ENCODE measurements at regions of chr1 and their contacts with region 1.

Region 1: GRCh38 chr1:155063550-155064110 is at the start of gene EFNA4:
- DNase-seq: peak; percentile 91
- H3K4me3 Mint-ChIP-seq: peak within 1 kb of the TSS; percentile 91
- H3K27ac Mint-ChIP-seq: peak within 1 kb of the TSS; percentile 68
- H3K4me1 Mint-ChIP-seq: peaks cover 36% of the 10 kb centered on the region
- H3K27me3 Mint-ChIP-seq: no peaks in the 10 kb centered on the region
- total RNA-seq, gene EFNA4: 8.2 to 8.3 TPM

Region 2: DNA sequence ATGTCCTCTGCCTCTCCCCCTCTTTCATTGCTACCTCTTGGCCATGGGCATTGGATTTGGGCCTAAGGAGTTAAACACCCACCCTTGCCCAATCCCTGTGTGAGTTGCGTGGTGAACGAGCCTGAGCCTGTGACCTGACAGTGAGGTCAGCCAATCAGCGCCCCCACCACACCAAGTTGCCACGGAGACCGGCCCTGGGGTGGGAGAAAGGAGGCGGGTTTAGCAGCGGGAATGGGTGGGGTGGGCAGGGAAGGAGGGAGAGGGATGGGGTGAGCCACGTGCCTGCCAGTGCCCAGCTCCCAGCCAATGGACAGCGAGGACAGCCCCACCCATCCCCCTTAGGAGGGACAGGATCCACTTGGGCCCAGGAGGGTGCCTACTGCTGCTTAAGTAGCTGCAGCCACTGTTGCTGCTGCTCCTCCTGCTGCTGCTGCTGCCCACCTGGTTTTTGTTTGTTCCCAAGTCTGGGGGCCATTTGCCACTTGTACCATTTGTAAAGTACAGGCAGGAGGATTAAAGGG is 51.5 kb before region 1 on chr1:
- CTCF ChIA-PET with region 1: interaction called, 11 read pairs
- POLR2A ChIA-PET with region 1: no interaction called
- DNase-seq: peak; percentile 52
- H3K4me3 Mint-ChIP-seq: peak overlapping the region; percentile 99
- H3K27ac Mint-ChIP-seq: peak overlapping the region; percentile 89
- H3K4me1 Mint-ChIP-seq: peaks cover 74% of the 10 kb centered on the region
- H3K27me3 Mint-ChIP-seq: no peaks in the 10 kb centered on the region

Region 3: DNA sequence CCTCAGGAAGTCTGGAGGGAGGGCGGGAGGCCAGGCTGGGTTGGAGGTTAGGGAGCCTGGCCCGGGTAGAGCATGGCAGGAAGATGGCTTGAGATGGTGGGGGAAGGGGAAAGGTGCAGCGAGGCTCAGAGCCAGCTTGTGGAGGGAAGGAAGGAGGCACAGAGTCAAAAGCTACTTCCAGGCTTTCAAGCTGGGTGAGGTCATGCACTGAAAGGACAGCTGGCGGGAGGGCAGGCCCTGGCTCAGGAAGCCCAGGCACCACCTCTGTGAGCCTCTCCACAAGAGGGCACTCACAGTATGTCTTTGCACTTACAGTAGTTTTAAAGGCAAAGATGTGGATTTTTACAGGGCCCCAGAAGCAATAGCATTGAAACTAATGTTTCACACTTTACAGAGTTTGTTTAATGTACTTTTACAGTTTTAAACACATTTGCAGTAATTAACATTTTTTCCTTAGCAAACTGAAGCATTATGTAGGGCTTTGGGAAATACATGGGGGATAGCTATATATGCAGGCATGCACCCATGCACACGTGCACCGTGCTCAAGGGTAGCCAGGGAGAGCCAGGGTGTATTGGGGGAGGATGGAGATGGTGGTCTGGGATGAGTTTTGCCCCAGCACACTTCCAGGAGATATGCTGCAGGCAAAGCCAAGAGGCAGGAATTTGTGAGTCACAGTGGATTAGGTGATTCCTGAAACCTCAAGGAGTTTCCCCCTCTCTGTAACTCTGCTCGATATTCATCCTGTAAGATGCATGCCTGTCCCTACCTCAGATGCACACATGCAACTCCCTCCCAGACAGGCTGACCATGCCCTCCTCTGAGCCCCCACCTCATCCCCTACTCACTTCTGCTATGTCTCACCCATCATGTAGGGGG is 18.6 kb before region 1 on chr1:
- CTCF ChIA-PET with region 1: interaction called, 32 read pairs
- POLR2A ChIA-PET with region 1: no interaction called
- DNase-seq: peak; percentile 78
- H3K4me3 Mint-ChIP-seq: no peak overlapping the region
- H3K27ac Mint-ChIP-seq: peak overlapping the region; percentile 60
- H3K4me1 Mint-ChIP-seq: peaks cover 16% of the 10 kb centered on the region
- H3K27me3 Mint-ChIP-seq: peaks cover 2% of the 10 kb centered on the region

Region 4: GRCh38 chr1:155050560-155051341 is 12.9 kb before region 1 on chr1 and contains the start of gene ADAM15:
- CTCF ChIA-PET with region 1: interaction called, 48 read pairs
- POLR2A ChIA-PET with region 1: no interaction called
- DNase-seq: peak; percentile 81
- H3K4me3 Mint-ChIP-seq: peak within 1 kb of the TSS; percentile 82
- H3K27ac Mint-ChIP-seq: peak within 1 kb of the TSS; percentile 81
- H3K4me1 Mint-ChIP-seq: peaks cover 30% of the 10 kb centered on the region
- H3K27me3 Mint-ChIP-seq: no peaks in the 10 kb centered on the region
- total RNA-seq, gene ADAM15: 40.2 to 45.0 TPM

Measured in activated CD4-positive, alpha-beta T cell treated with anti-CD3 and anti-CD28 coated beads, Interleukin-2, amount 10 ng/mL, durations not matched to agents 7 days and 5 days (primary cell).